ENCODE measurements at regions of chr16 and their contacts with region 1.

Region 1: GRCh38 chr16:23877107-23878090 is 41.6 kb downstream of the PRKCB start:
- DNase-seq: peak in 7 of 10 donors; percentile 11 to 68 (median 39)
- ATAC-seq: peak; percentile 58 to 64
- H3K4me3 Mint-ChIP-seq: no peak overlapping the region
- H3K27ac Mint-ChIP-seq: peak overlapping the region; percentile 17 to 83 (median 64)
- H3K4me1 Mint-ChIP-seq: peaks cover 34 to 89% (median 81%) of the 10 kb centered on the region in 4 donors
- H3K27me3 Mint-ChIP-seq: no peaks in the 10 kb centered on the region

Region 2: GRCh38 chr16:23896832-23897821 is 19.7 kb after region 1 on chr16:
- POLR2A ChIA-PET with region 1: interaction called, 13 read pairs
- DNase-seq: peak in 3 of 10 donors; percentile 21 to 44 (median 38)
- ATAC-seq: peak; percentile 39 to 69
- H3K4me3 Mint-ChIP-seq: peak overlapping the region; percentile 53 to 81 (median 70)
- H3K27ac Mint-ChIP-seq: peak overlapping the region; percentile 26 to 95 (median 84)
- H3K4me1 Mint-ChIP-seq: peaks cover 35 to 86% (median 73%) of the 10 kb centered on the region in 4 donors
- H3K27me3 Mint-ChIP-seq: no peaks in the 10 kb centered on the region

Region 3: DNA sequence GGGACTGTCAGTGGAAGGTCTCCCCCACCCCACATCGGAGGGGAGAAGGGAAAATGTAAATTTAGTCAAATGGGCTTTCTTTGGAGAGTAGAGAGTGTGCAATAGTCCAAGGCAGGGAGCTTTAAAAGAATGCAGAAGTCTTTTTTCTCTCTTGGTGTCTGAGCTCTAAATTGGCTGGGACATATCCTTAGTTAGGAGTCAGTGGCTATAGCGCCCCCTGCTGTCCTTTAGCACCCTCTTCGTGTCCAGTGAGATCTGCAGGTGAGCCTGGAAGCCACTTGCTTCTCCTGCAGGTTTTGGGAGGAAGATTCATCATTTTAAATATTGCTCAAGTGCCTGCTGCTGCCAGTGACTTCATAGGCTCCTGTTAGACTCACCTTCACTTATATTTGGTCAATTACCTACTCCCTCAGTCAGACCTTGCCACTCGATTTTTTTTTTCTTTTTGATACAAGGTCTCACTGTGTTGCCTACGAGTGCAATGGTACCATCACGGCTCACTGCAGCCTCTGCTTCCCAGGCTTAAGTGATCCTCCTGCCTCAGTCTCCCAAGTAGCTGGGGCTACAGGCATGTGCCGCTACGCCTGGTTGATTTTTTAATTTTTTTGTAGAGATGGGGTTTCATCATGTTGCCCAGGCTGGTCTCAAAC is 133.2 kb after region 1 on chr16:
- POLR2A ChIA-PET with region 1: interaction called, 22 read pairs
- DNase-seq: peak; percentile 60 to 92 (median 76)
- ATAC-seq: no peak
- H3K4me3 Mint-ChIP-seq: peak overlapping the region in 3 of 10 donors; percentile 6 to 30 (median 12)
- H3K27ac Mint-ChIP-seq: peak overlapping the region in 7 of 10 donors; percentile 35 to 90 (median 54)
- H3K4me1 Mint-ChIP-seq: peaks cover 39 to 93% (median 80%) of the 10 kb centered on the region in 4 donors
- H3K27me3 Mint-ChIP-seq: no peaks in the 10 kb centered on the region

Region 4: DNA sequence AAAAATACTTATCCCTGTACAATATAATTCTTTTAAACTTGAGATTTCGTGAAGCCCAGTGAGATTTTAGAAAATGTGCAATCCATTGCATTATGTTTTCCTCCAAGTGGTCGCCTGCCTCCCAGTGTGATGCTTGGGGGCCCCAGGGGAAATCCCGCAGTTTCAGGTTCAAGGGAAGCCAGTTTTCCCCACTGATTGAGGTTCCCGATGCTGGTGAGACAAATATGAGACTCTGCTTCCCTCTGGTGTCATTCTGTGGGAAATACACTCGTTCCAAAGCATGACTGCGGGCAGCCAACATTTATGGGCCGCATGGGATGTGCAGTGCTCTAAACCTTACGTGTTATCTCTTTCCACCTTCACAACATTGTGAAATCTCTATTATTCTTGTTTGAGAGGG is 159.2 kb after region 1 on chr16:
- POLR2A ChIA-PET with region 1: interaction called, 17 read pairs
- DNase-seq: peak in 9 of 10 donors; percentile 12 to 69 (median 45)
- ATAC-seq: peak; percentile 36 to 47
- H3K4me3 Mint-ChIP-seq: peak overlapping the region; percentile 51 to 95 (median 76)
- H3K27ac Mint-ChIP-seq: peak overlapping the region in 9 of 10 donors; percentile 34 to 91 (median 77)
- H3K4me1 Mint-ChIP-seq: peaks cover 26 to 60% (median 55%) of the 10 kb centered on the region in 4 donors
- H3K27me3 Mint-ChIP-seq: no peaks in the 10 kb centered on the region

Region 5: DNA sequence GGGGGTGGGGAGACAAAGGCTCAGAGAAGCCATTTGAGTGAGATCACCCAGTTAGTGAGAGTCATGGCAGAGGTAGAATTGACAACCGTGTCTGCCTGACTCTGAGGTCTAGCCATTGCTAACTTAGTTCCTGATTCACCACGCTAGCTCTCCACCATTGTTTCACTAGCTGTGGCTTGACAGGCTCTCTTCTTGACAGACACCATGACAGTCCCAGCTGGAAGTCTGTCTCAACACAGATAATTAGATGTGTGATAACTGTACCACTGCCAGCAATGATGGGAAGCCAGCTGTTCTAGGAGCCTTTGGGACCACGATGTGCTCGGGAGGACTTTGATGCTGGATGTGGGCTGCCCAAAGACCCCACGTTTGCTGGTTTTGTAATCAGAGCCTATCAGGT is 208.3 kb after region 1 on chr16:
- POLR2A ChIA-PET with region 1: no interaction called
- DNase-seq: no peak
- ATAC-seq: no peak
- H3K4me3 Mint-ChIP-seq: no peak overlapping the region
- H3K27ac Mint-ChIP-seq: peak overlapping the region in 3 of 10 donors; percentile 35 to 71 (median 42)
- H3K4me1 Mint-ChIP-seq: peaks cover 0 to 13% (median 8%) of the 10 kb centered on the region in 4 donors
- H3K27me3 Mint-ChIP-seq: no peaks in the 10 kb centered on the region